ENCODE measurements at regions of chr15 and their contacts with region 1.

Region 1: GRCh38 chr15:40440743-40441564 is at the start of gene BAHD1:
- DNase-seq: peak; percentile 95
- ATAC-seq: peak; percentile 90
- H3K4me3 Mint-ChIP-seq: peak within 1 kb of the TSS; percentile 92
- H3K27ac Mint-ChIP-seq: peak within 1 kb of the TSS; percentile 80
- H3K4me1 Mint-ChIP-seq: peaks cover 33% of the 10 kb centered on the region
- H3K27me3 Mint-ChIP-seq: peaks cover 46% of the 10 kb centered on the region
- total RNA-seq, gene BAHD1: 29.6 to 30.0 TPM

Region 2: GRCh38 chr15:40454904-40455391 is 14.0 kb after region 1 on chr15:
- POLR2A ChIA-PET with region 1: interaction called, 72 read pairs
- DNase-seq: no peak
- ATAC-seq: no peak
- H3K4me3 Mint-ChIP-seq: peak overlapping the region; percentile 70
- H3K27ac Mint-ChIP-seq: peak overlapping the region; percentile 88
- H3K4me1 Mint-ChIP-seq: peaks cover 59% of the 10 kb centered on the region
- H3K27me3 Mint-ChIP-seq: no peaks in the 10 kb centered on the region